Aorta (tissue), 5 donors: ENCODE measurements at regions of chr16 and their contacts with region 1.

Region 1: DNA sequence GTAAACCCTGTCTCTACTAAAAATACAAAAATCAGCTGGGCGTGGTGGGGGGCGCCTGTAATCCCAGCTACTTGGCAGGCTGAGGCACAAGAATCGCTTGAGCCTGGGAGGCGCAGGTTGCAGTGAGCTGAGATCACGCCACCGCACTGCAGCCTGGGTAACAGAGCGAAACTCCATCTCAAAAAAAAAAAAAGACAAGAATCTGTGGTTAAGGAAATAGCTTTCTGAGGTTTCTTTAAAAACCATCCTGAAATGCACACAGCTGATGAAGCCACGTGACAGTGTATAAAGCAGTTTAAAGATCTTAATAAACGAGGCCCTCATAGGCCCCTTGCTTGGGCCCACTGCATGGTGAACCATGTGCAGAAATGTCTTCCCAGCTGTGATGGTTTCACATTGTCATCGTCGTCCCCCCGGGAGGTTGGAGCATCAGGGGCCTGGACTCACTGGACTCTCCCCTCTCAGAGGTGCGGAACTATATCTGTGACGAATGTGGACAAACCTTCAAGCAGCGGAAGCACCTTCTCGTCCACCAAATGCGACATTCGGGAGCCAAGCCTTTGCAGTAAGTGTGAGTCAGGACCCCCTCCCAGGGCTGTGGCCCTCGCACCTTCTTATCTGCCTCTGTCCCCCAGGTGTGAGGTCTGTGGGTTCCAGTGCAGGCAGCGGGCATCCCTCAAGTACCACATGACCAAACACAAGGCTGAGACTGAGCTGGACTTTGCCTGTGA is 16.2 kb downstream of the ZNF276 start:
- DNase-seq: no peak
- ATAC-seq: no peak
- H3K4me3 ChIP-seq: no peak overlapping the region
- H3K27ac ChIP-seq: no peak overlapping the region
- H3K4me1 ChIP-seq: no peaks in the 10 kb centered on the region
- H3K27me3 ChIP-seq: no peaks in the 10 kb centered on the region

Region 2: GRCh38 chr16:89785523-89786155 is 48.1 kb after region 1 on chr16:
- intact Hi-C with region 1: loop called in 1 of 2 experiments (anchors 10 kb)
- DNase-seq: no peak
- ATAC-seq: no peak
- H3K4me3 ChIP-seq: no peak overlapping the region
- H3K27ac ChIP-seq: no peak overlapping the region
- H3K4me1 ChIP-seq: no peaks in the 10 kb centered on the region
- H3K27me3 ChIP-seq: no peaks in the 10 kb centered on the region

Region 3: DNA sequence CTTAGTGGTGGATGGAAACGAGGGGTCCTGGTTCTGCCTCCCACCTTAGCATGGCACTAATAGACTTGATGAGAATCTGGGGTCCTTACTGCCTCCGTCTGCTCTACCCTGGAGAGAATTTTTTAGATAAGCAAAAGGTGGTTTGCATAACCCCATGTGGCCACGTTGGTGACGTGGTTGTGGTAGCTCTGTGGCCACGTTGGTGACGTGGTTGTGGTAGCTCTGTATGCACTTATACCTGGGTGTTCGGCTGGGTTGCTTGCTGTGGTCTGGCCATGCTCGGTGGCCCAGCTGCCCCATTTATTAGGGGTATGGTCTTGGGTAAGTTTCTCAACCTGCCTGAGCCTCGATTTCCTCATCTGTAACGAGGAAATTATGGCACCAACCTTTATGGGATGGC is 103.8 kb after region 1 on chr16:
- intact Hi-C with region 1: no loop called
- DNase-seq: no peak
- ATAC-seq: no peak
- H3K4me3 ChIP-seq: no peak overlapping the region
- H3K27ac ChIP-seq: no peak overlapping the region
- H3K4me1 ChIP-seq: no peaks in the 10 kb centered on the region
- H3K27me3 ChIP-seq: no peaks in the 10 kb centered on the region